OCI-LY7 (cell line): ENCODE measurements at regions of chr13 and their contacts with region 1.

Region 1: DNA sequence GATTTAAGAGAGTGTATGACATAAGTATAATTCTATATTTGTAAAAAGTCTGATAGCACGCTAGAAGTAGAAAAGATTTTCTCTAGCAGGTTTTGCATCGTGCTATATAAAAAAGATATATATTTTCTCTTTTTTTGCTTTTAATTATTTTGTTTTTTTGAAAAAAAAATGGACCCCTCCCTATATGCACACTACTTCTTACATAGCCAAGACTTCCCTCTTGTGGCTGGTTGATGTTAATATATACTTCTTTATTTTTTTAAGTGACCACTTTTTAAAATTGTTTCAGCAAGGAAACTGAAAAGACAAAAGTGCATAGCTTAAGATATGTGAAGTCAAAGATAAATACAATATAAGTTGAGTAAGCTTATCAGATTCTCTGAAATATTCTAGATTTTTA is 1202.8 kb downstream of the DIAPH3 start:
- DNase-seq: peak; percentile 65
- H3K4me3 ChIP-seq: no peak overlapping the region
- H3K27ac ChIP-seq: no peak overlapping the region
- H3K4me1 ChIP-seq: peaks cover 17% of the 10 kb centered on the region
- CTCF ChIP-seq: peak; percentile 88

Region 2: DNA sequence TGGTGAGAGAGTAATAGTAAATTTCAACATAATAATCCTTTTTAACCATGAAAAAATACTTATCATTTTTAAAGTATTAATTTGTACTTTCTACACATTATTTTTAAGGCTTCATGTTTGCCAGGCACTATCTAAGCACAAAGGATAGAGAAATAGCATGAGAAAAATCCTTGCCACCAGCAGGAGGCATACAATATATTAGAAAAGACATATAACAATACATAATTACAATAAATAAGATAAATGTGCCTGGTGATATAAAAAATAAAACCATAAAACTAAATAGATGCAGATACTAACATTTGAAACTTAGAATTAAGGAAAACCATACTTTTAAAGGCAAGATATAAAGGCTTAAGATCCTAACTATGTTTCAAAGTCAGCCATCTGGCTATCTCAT is 53.5 kb before region 1 on chr13:
- CTCF ChIA-PET with region 1: no interaction called
- POLR2A ChIA-PET with region 1: interaction called, 4 read pairs
- intact Hi-C with region 1: loop called (anchors 5 kb)
- DNase-seq: no peak
- H3K4me3 ChIP-seq: no peak overlapping the region
- H3K27ac ChIP-seq: no peak overlapping the region
- H3K4me1 ChIP-seq: no peaks in the 10 kb centered on the region
- CTCF ChIP-seq: peak; percentile 68

Region 3: GRCh38 chr13:58978331-58978730 is 17.4 kb after region 1 on chr13:
- CTCF ChIA-PET with region 1: no interaction called
- POLR2A ChIA-PET with region 1: interaction called, 17 read pairs
- intact Hi-C with region 1: no loop called
- DNase-seq: no peak
- H3K4me3 ChIP-seq: no peak overlapping the region
- H3K27ac ChIP-seq: no peak overlapping the region
- H3K4me1 ChIP-seq: no peaks in the 10 kb centered on the region
- CTCF ChIP-seq: no peak